Activated T-helper 2 cell treated with anti-CD3 and anti-CD28 coated beads, Interferon-gamma antibody, Interleukin-2, Interleukin-4, amounts not matched to agents 10 μg/mL and 5 μg/mL and 100 μg/mL, durations not matched to agents 14 hours and 24 hours and 36 hours (primary cell): ENCODE measurements at regions of chr6 and their contacts with region 1.

Region 1: DNA sequence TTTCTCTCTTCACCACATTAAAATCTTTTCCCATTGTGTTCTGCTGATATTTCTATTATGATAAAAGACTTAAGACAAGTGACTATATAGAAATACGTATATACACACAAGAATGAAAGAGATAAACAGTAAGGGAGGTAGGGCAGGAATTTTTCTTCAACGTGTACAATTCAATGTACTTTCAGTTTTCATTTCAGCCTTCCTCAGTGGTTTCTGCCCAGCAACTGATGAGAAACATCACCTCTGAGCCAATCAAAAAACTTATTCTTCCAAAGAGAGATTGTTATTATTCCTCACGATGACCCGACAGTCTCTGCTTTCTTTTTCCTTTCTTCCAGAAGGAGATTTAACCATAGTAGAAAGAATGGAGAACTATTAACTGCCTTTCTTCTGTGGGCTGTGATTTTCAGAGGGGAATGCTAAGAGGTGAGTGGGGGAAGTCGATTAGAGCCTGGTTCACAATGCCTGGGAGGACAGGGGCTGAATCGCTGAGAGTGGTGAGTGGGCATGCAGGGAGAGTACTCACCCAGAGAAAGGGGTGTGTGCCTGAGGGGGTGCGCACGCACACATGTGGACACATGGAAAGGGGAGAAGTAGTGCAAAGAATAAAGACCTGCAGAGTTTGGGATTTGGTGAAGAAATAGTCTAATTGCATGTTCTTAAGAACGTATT is at the start of gene BTN3A1:
- DNase-seq: peak; percentile 51
- H3K4me3 Mint-ChIP-seq: peak within 1 kb of the TSS; percentile 93
- H3K27ac Mint-ChIP-seq: peak within 1 kb of the TSS; percentile 98
- H3K4me1 Mint-ChIP-seq: peaks cover 39% of the 10 kb centered on the region
- H3K27me3 Mint-ChIP-seq: no peaks in the 10 kb centered on the region
- total RNA-seq, gene BTN3A1: 34.8 and 38.6 TPM in 2 replicates

Region 2: GRCh38 chr6:26363882-26364701 is 38.0 kb before region 1 on chr6:
- intact Hi-C with region 1: loop called (anchors 1 kb)
- DNase-seq: no peak
- H3K4me3 Mint-ChIP-seq: no peak overlapping the region
- H3K27ac Mint-ChIP-seq: no peak overlapping the region
- H3K4me1 Mint-ChIP-seq: peaks cover 52% of the 10 kb centered on the region
- H3K27me3 Mint-ChIP-seq: no peaks in the 10 kb centered on the region

Region 3: GRCh38 chr6:26439657-26440056 is 37.5 kb after region 1 on chr6:
- intact Hi-C with region 1: loop called (anchors 1 kb)
- DNase-seq: no peak
- H3K4me3 Mint-ChIP-seq: peak overlapping the region; percentile 96
- H3K27ac Mint-ChIP-seq: peak overlapping the region; percentile 97
- H3K4me1 Mint-ChIP-seq: peaks cover 30% of the 10 kb centered on the region
- H3K27me3 Mint-ChIP-seq: no peaks in the 10 kb centered on the region

Region 4: GRCh38 chr6:26524722-26525370 is 122.7 kb after region 1 on chr6:
- intact Hi-C with region 1: no loop called
- DNase-seq: no peak
- H3K4me3 Mint-ChIP-seq: no peak overlapping the region
- H3K27ac Mint-ChIP-seq: no peak overlapping the region
- H3K4me1 Mint-ChIP-seq: peaks cover 34% of the 10 kb centered on the region
- H3K27me3 Mint-ChIP-seq: peaks cover 2% of the 10 kb centered on the region